Activated CD4-positive, alpha-beta memory T cell treated with anti-CD3 and anti-CD28 coated beads, Interleukin-2, amount 10 ng/mL, durations not matched to agents 7 days and 5 days (primary cell): ENCODE measurements at regions of chr19 and their contacts with region 1.

Region 1: GRCh38 chr19:33373701-33374421 is at the start of gene CEBPG:
- DNase-seq: no peak
- H3K4me3 Mint-ChIP-seq: peak within 1 kb of the TSS; percentile 88
- H3K27ac Mint-ChIP-seq: peak within 1 kb of the TSS; percentile 82
- H3K4me1 Mint-ChIP-seq: peaks cover 51% of the 10 kb centered on the region
- H3K27me3 Mint-ChIP-seq: no peaks in the 10 kb centered on the region
- total RNA-seq, gene CEBPG: 30.0 to 31.4 TPM

Region 2: DNA sequence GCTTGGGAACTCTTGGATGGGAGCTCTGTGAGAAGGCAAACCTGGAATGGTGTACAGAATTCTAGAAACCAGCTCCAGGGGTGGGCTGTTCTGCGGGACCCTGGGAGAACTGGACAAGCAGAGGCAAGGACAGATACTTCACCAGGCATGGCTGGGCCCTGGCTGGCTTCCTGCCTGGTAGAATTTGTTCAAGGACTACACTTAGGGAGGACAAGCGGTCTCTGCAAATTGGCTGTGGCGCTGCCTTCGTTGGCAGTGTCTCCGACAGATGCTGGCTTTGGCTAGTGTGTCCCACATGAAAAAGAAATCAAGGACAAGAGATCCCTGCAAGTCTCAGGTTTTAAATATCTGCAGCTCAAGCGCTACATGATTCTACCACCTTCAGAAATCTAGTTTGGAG is 12.1 kb after region 1 on chr19:
- CTCF ChIA-PET with region 1: interaction called, 4 read pairs
- POLR2A ChIA-PET with region 1: interaction called, 20 read pairs
- DNase-seq: no peak
- H3K4me3 Mint-ChIP-seq: no peak overlapping the region
- H3K27ac Mint-ChIP-seq: no peak overlapping the region
- H3K4me1 Mint-ChIP-seq: peaks cover 2% of the 10 kb centered on the region
- H3K27me3 Mint-ChIP-seq: no peaks in the 10 kb centered on the region